PC-9 (cell line): ENCODE measurements at regions of chr12 and their contacts with region 1.

Region 1: DNA sequence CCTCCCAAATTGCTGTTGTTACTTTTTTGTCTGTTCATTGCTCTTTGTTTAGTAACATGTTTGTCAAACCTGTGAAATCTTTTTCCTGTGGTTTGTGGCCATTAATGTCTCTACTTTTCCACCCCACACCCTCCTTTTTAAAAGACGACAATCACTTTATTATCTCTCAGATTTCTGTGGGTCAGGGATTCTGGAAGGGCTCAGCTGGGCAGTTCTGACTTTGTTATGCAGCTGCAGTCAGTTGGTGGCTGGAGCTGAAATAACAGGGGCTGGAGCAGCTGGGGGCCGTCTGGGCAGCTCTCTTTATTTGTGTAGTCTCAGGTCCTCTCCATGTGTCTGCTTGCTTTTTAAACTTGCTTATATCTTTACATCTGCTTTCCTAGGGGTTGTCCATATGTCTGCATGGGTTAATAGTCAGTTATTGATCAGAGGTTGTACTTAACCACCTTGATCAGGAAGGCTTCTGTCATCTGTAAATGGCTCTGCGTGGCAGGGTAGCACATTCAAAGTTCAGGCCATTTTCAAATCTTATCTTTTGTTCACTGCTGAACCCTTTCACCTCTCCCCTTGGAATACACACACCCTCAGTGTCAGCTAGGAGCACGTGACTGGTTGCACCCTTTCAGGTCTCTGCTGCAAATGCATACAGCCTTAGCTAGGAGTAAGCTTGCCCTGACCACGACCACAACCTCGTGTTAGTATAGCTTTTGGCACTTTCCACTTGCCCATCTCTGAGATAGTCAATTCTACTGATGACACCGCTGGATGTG is 27.9 kb downstream of the BORCS5 start:
- DNase-seq: no peak
- H3K4me3 ChIP-seq: no peak overlapping the region
- H3K27ac ChIP-seq: no peak overlapping the region
- H3K4me1 ChIP-seq: no peaks in the 10 kb centered on the region
- H3K27me3 ChIP-seq: no peaks in the 10 kb centered on the region
- CTCF ChIP-seq: no peak

Region 2: GRCh38 chr12:12425616-12426015 is 40.9 kb after region 1 on chr12:
- CTCF ChIA-PET with region 1: interaction called, 10 read pairs
- POLR2A ChIA-PET with region 1: no interaction called
- intact Hi-C with region 1: no loop called
- DNase-seq: no peak
- H3K4me3 ChIP-seq: no peak overlapping the region
- H3K27ac ChIP-seq: no peak overlapping the region
- H3K4me1 ChIP-seq: no peaks in the 10 kb centered on the region
- H3K27me3 ChIP-seq: no peaks in the 10 kb centered on the region
- CTCF ChIP-seq: no peak